ENCODE measurements at regions of chr17 and their contacts with region 1.

Region 1: GRCh38 chr17:12256380-12256995 is 235.8 kb downstream of the MAP2K4 start:
- DNase-seq: peak in 4 of 5 donors; percentile 34 to 82 (median 55)
- H3K4me3 ChIP-seq: no peak overlapping the region
- H3K27ac ChIP-seq: no peak overlapping the region
- H3K4me1 ChIP-seq: no peaks in the 10 kb centered on the region
- H3K27me3 ChIP-seq: no peaks in the 10 kb centered on the region
- CTCF ChIP-seq: peak; percentile 67

Region 2: DNA sequence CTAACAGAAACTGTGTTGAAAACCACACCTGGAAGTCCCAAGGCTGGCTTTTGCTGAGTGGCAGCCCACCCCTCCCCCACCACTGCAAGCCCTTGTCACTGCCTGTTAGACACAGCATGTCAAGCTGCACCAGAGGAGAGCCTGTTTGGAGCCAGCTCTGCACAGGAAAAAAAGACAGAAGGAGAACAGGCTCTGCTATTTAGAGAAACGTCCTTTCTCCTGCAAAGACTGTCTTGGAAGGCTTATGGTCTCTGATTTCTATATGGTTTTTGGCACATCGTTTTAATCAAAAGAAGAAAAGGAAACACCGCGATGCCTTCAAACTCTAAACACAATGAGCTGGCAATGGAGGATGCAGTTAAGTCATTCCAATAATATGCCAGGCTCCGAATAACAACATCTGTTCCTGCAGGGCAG is 39.7 kb after region 1 on chr17:
- intact Hi-C with region 1: no loop called
- DNase-seq: peak in 3 of 5 donors; percentile 4 to 11 (median 9)
- H3K4me3 ChIP-seq: no peak overlapping the region
- H3K27ac ChIP-seq: no peak overlapping the region
- H3K4me1 ChIP-seq: no peaks in the 10 kb centered on the region
- H3K27me3 ChIP-seq: no peaks in the 10 kb centered on the region
- CTCF ChIP-seq: no peak

Region 3: GRCh38 chr17:12376276-12376675 is 119.8 kb after region 1 on chr17:
- intact Hi-C with region 1: no loop called
- DNase-seq: no peak
- H3K4me3 ChIP-seq: no peak overlapping the region
- H3K27ac ChIP-seq: no peak overlapping the region
- H3K4me1 ChIP-seq: no peaks in the 10 kb centered on the region
- H3K27me3 ChIP-seq: no peaks in the 10 kb centered on the region
- CTCF ChIP-seq: no peak

Region 4: DNA sequence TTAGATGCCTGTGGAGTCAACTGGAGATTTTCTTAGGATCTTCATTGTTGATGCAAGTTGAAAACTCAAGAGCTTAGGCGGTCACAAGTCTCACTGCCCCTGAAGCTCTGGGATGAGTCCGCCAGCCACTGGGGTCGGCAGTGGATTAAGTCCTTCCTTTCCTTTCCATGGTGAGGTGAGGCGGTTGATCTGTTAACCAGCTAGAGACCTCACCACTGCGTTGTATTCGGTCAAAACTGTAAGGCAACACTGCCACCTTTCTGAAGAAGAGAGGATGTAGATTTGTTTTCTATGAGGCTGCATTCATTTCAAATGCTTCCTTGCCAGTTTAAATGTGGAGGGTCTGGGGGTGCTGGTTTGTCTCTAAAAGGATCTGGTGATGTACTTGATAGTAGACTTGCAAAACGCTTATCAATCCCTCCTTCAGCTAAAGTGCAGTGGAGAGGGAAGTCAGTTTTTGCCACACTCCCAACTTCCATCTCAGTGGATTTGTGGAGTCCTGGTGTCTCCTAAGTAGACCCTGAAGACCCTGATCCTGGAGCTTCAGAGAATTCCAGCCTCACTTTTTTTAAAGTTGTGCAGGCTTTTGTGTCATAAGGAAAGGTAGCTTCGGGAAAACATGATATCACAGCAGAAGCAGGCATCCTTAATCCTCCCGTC is 410.9 kb after region 1 on chr17:
- intact Hi-C with region 1: loop called (anchors 5 kb)
- DNase-seq: peak in 3 of 5 donors; percentile 49 to 91 (median 80)
- H3K4me3 ChIP-seq: no peak overlapping the region
- H3K27ac ChIP-seq: no peak overlapping the region
- H3K4me1 ChIP-seq: no peaks in the 10 kb centered on the region
- H3K27me3 ChIP-seq: peaks cover 8% of the 10 kb centered on the region
- CTCF ChIP-seq: peak; percentile 32